Activated naive CD4-positive, alpha-beta T cell treated with anti-CD3 and anti-CD28 coated beads for 36 hours (primary cell): ENCODE measurements at regions of chr14 and their contacts with region 1.

Region 1: DNA sequence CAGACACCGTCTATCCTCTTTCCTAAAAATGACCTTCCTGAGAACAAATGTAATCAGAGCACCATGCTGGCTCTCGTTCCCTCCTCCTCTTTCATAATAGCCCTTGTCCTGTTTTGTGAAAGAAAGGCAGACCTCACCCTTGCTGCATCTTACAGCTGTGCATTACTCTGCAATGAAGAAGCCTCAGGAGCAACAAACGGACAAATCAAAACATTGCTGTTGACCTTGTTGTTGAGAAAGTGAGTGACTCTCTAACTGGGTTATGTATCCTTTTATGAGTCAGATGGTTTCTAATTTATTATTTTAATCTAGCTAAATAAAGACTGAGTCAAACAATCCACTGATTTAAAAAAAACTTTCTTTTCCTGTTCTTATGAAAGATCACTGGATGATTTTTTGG is 180.9 kb downstream of the RPS29 start:
- DNase-seq: no peak
- H3K4me3 Mint-ChIP-seq: no peak overlapping the region
- H3K27ac Mint-ChIP-seq: no peak overlapping the region
- H3K4me1 Mint-ChIP-seq: peaks cover 6% of the 10 kb centered on the region
- H3K27me3 Mint-ChIP-seq: peaks cover 19% of the 10 kb centered on the region

Region 2: DNA sequence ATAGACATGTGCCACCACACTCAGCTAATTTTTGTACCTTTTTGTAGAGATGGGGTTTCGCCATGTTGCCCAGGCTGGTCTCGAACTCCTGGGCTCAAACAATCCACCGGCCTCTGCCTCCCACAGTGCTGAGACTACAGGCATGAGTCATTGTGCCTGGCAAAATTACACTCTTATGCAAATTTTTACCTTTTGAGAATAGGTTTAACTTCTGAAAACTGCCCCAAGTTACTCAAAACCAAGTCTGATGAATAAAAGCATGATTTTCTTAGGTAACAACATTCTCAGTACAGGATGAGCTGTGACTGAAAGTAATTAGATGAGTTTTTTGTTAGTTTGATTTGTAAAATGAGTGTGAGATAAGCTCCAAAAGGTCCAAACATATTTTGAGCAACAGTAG is 14.9 kb after region 1 on chr14:
- CTCF ChIA-PET with region 1: no interaction called
- intact Hi-C with region 1: loop called (anchors 1 kb)
- DNase-seq: peak; percentile 58
- H3K4me3 Mint-ChIP-seq: no peak overlapping the region
- H3K27ac Mint-ChIP-seq: peak overlapping the region; percentile 37
- H3K4me1 Mint-ChIP-seq: peaks cover 18% of the 10 kb centered on the region
- H3K27me3 Mint-ChIP-seq: peaks cover 41% of the 10 kb centered on the region